ENCODE measurements at regions of chr6 and their contacts with region 1.

Region 1: GRCh38 chr6:46419576-46420002 is 71.7 kb downstream of the RCAN2 start:
- DNase-seq: peak; percentile 60
- H3K4me3 ChIP-seq: no peak overlapping the region
- H3K27ac ChIP-seq: no peak overlapping the region
- H3K4me1 ChIP-seq: no peaks in the 10 kb centered on the region
- H3K27me3 ChIP-seq: no peaks in the 10 kb centered on the region
- CTCF ChIP-seq: peak; percentile 71 to 86 (median 76)
- EP300 ChIP-seq: no peak
- POLR2A ChIP-seq: no peak

Region 2: GRCh38 chr6:46090115-46091079 is 329.2 kb before region 1 on chr6:
- in situ Hi-C with region 1: loop called in 2 of 4 experiments (anchors 10 to 25 kb)
- intact Hi-C with region 1: no loop called
- DNase-seq: peak; percentile 66
- H3K4me3 ChIP-seq: no peak overlapping the region
- H3K27ac ChIP-seq: no peak overlapping the region
- H3K4me1 ChIP-seq: no peaks in the 10 kb centered on the region
- H3K27me3 ChIP-seq: no peaks in the 10 kb centered on the region
- CTCF ChIP-seq: peak; percentile 74 to 83 (median 79)
- EP300 ChIP-seq: no peak
- POLR2A ChIP-seq: no peak

Region 3: GRCh38 chr6:46234156-46234556 is 185.4 kb before region 1 on chr6:
- in situ Hi-C with region 1: loop called in 1 of 4 experiments (anchors 10 kb)
- intact Hi-C with region 1: no loop called
- DNase-seq: no peak
- H3K4me3 ChIP-seq: no peak overlapping the region
- H3K27ac ChIP-seq: no peak overlapping the region
- H3K4me1 ChIP-seq: no peaks in the 10 kb centered on the region
- H3K27me3 ChIP-seq: no peaks in the 10 kb centered on the region
- CTCF ChIP-seq: no peak
- EP300 ChIP-seq: no peak
- POLR2A ChIP-seq: no peak

Region 4: GRCh38 chr6:46612645-46613044 is 193.1 kb after region 1 on chr6:
- in situ Hi-C with region 1: loop called in 1 of 4 experiments (anchors 10 kb)
- intact Hi-C with region 1: no loop called
- DNase-seq: no peak
- H3K4me3 ChIP-seq: no peak overlapping the region
- H3K27ac ChIP-seq: no peak overlapping the region
- H3K4me1 ChIP-seq: no peaks in the 10 kb centered on the region
- H3K27me3 ChIP-seq: no peaks in the 10 kb centered on the region
- CTCF ChIP-seq: no peak
- EP300 ChIP-seq: no peak
- POLR2A ChIP-seq: no peak